Activated CD4-positive, alpha-beta memory T cell treated with anti-CD3 and anti-CD28 coated beads, Interleukin-2, amount 10 ng/mL, durations not matched to agents 7 days and 5 days (primary cell): ENCODE measurements at regions of chr11 and their contacts with region 1.

Region 1: DNA sequence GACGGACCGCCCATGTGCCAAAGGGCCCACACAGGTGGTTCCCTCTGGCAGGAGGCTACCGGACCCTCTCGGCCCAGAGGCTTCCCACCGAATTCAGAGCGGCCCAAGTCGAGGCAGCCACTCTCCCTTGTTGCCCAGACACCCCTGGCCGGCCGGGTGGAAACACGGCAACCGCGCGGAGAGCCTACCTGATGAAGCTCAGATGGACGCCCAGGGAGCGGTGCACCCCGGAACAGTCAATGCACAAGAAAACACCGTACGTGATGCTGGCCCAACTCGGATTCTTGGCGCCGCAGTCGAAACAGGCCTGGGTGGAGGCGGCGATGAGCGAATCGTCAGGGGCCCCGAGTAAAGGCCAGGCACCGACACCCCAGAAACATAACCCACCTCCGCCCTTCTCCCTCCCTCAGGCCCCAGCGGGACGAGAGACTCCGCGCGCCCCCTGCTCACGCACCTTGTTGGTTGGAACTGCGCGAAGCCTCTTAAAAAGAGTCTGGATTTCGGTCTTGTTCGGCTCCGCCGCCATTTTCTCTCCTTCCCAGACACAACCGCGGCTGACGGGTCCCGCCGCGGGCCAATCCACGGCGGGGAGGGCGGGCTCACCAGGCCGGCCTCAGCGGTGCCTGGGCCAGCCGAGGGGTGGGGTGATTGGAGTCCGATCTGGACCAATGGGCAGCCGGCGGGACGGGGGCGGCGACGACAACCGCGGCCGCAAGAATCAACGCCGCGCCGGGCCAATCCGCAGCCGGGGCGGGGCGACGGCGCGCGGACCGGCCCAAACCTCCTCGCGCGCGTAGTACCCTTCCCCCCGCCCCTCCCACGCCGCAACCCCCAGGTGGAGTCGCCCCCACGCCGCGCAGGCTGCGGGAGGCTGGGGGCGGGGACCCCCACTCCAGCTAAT is at the start of gene ARFGAP2:
- DNase-seq: peak; percentile 97
- H3K4me3 Mint-ChIP-seq: peak within 1 kb of the TSS; percentile 94
- H3K27ac Mint-ChIP-seq: peak within 1 kb of the TSS; percentile 98
- H3K4me1 Mint-ChIP-seq: peaks cover 48% of the 10 kb centered on the region
- H3K27me3 Mint-ChIP-seq: no peaks in the 10 kb centered on the region
- total RNA-seq, gene ARFGAP2: 82.0 to 85.7 TPM

Region 2: DNA sequence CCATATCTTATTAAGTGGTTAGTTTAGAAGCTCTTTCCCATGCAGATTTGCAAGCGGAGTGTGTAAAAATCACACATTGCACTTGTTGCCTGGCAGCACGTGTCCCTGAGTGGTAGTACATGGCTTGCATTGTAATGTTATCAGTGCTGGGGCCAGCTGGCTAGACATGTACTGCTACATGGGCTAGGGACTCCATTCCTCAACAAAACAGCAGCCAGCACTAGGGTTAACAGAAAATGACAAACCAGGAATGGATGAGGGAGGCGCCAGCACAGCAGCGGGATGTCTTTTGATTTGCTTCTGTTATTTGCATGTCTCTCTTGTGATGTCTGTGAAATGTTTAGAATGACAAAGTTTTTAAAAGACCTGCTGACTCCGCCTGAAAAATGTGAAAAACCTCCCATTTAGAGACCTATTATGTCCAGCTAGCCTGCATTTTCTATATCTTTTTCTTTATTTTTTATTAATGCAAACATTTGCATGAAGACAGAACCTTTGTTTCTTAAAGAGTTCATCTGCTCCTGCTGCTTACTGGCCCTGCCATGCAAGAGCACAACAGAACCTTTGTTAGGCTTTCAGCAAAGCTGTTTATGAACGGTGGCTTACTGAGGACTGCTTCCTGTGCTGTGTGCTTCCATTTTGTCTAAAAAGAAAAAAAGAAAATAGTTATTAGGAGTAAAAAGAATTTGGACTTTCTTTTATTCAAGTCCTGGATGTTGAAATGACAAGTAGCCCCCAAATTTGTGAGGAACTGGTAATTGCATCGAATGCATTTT is 199.4 kb before region 1 on chr11:
- CTCF ChIA-PET with region 1: no interaction called
- POLR2A ChIA-PET with region 1: no interaction called
- DNase-seq: no peak
- H3K4me3 Mint-ChIP-seq: no peak overlapping the region
- H3K27ac Mint-ChIP-seq: no peak overlapping the region
- H3K4me1 Mint-ChIP-seq: peaks cover 14% of the 10 kb centered on the region
- H3K27me3 Mint-ChIP-seq: no peaks in the 10 kb centered on the region

Region 3: GRCh38 chr11:47143322-47143721 is 33.3 kb before region 1 on chr11:
- CTCF ChIA-PET with region 1: no interaction called
- POLR2A ChIA-PET with region 1: no interaction called
- DNase-seq: no peak
- H3K4me3 Mint-ChIP-seq: no peak overlapping the region
- H3K27ac Mint-ChIP-seq: no peak overlapping the region
- H3K4me1 Mint-ChIP-seq: peaks cover 4% of the 10 kb centered on the region
- H3K27me3 Mint-ChIP-seq: no peaks in the 10 kb centered on the region

Region 4: DNA sequence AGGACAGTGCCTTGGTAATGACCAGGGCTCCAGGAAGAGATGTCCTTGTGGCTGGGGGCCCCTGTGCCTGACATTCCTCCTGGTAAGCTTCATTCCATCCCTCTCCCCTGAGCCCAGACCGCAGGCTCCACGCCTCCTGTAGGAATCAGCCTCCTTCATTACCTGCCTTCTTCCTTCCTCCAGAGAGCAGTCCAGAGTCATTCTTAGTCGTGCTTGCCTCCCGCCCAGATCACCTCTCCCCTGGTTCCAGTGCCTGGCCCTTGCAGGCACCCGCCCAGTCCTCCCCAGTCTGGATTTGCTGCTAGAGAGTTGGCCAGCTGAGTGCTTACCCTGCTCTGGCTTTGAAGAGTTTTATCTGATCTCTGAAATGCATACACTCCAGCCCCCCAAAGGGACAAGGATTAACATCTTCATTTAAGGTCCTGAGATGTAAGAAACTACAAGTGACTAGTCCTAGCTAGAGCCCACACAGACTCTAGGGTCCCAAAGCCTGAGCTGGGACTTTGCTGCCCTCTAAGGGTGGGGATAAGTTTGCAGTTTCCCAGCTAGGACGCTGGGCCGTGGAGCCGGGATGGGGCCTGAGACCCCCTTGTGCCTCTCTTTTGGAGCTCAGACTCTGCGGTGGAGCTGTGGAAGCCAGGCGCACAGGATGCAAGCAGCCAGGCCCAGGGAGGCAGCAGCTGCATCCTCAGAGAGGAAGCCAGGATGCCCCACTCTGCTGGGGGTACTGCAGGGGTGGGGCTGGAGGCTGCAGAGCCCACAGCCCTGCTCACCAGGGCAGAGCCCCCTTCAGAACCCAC is 82.8 kb after region 1 on chr11:
- CTCF ChIA-PET with region 1: interaction called, 38 read pairs
- POLR2A ChIA-PET with region 1: interaction called, 4 read pairs
- DNase-seq: peak; percentile 36
- H3K4me3 Mint-ChIP-seq: no peak overlapping the region
- H3K27ac Mint-ChIP-seq: no peak overlapping the region
- H3K4me1 Mint-ChIP-seq: peaks cover 9% of the 10 kb centered on the region
- H3K27me3 Mint-ChIP-seq: no peaks in the 10 kb centered on the region